ENCODE measurements at regions of chr2 and their contacts with region 1.

Region 1: GRCh38 chr2:216081487-216082116 is at the starts of genes PECR and TMEM169:
- DNase-seq: peak; percentile 85
- ATAC-seq: peak; percentile 92
- H3K4me3 Mint-ChIP-seq: peak within 1 kb of the TSS; percentile 96
- H3K27ac Mint-ChIP-seq: peak within 1 kb of the TSS; percentile 88
- H3K4me1 Mint-ChIP-seq: peaks cover 46% of the 10 kb centered on the region
- H3K27me3 Mint-ChIP-seq: peaks cover 2% of the 10 kb centered on the region
- total RNA-seq, gene PECR: 28.2 to 29.4 TPM
- total RNA-seq, gene TMEM169: 1.1 to 2.0 TPM

Region 2: GRCh38 chr2:215985257-215985656 is 96.3 kb before region 1 on chr2:
- POLR2A ChIA-PET with region 1: no interaction called
- DNase-seq: no peak
- ATAC-seq: no peak
- H3K4me3 Mint-ChIP-seq: no peak overlapping the region
- H3K27ac Mint-ChIP-seq: no peak overlapping the region
- H3K4me1 Mint-ChIP-seq: peaks cover 2% of the 10 kb centered on the region
- H3K27me3 Mint-ChIP-seq: no peaks in the 10 kb centered on the region

Region 3: DNA sequence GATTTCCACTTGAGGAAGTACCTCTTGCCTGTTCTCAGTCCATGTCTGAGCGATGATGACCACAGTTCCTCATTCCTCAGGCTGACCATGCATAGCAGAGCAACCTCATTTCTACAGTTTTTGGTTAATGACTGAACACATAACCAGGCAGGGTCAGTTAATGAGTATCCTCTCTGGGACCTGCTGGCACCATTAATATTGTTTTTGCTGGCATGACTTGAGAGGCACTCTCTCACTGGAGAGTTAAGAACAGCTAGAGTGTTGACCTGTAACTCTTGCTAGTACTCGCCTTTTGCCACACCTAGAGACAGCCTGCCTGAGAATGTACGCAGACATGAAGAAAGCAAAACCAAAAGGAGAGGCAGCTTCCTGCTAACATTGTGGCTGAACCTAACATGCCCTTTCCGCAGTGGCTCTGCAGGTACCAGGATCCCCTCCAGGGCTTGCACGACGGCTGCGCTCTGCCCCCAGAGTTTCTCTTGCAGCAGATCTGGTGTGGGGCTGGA is 23.9 kb before region 1 on chr2:
- POLR2A ChIA-PET with region 1: interaction called, 11 read pairs
- DNase-seq: peak; percentile 66
- ATAC-seq: peak; percentile 99
- H3K4me3 Mint-ChIP-seq: peak overlapping the region; percentile 79
- H3K27ac Mint-ChIP-seq: peak overlapping the region; percentile 92
- H3K4me1 Mint-ChIP-seq: peaks cover 31% of the 10 kb centered on the region
- H3K27me3 Mint-ChIP-seq: no peaks in the 10 kb centered on the region

Region 4: GRCh38 chr2:216388046-216388884 is 306.7 kb after region 1 on chr2:
- POLR2A ChIA-PET with region 1: no interaction called
- DNase-seq: no peak
- ATAC-seq: peak; percentile 99
- H3K4me3 Mint-ChIP-seq: peak overlapping the region; percentile 46
- H3K27ac Mint-ChIP-seq: peak overlapping the region; percentile 54
- H3K4me1 Mint-ChIP-seq: peaks cover 17% of the 10 kb centered on the region
- H3K27me3 Mint-ChIP-seq: peaks cover 5% of the 10 kb centered on the region

Region 5: DNA sequence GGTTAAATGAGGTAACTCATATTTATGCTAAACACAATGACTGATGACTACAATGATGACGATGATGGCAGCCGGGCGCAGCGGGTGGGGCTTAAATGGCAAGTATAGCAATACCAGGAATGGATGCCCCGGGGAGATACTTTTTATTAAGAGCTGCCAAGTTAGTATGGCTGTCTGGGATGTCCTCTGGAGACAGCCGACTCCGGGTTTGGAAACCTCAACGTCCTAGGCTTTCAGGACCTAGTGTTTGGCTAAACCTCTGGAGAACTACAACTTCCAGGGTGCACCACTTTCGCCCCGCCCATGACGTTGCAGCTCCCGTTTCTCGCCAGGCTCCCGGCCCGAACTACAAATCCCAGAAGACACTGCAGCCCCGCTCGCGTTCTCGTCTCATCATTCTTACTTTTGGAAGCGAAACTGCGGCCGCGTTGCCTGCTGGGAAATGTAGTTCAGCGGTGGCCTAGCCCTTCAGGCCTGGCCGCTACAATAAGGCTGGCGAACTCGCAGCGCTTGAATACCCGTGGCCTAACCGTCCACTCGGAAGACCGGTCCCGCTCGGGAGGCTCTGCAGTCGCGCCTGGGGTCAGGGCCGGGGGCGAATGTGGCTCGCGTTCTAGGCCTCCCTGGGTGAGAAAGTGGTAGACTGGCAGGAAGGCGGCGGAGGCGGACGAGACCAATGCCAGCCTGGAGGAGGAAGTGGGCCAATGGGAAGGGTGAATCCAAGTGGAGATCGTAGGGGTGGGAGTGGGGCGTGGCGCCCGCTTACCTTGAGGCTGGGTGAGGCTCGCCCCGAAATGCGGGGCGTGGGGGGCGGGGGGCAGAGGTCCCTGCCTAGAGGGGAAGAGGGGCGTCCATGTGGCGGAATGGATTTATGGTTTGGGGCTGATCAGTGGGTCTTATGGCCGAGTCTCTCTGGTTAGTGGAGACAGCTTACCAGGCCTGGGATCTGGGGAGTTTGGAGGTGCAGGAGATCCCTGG is 330.7 kb after region 1 on chr2 and contains the start of gene SMARCAL1:
- POLR2A ChIA-PET with region 1: no interaction called
- DNase-seq: peak; percentile 97
- ATAC-seq: peak; percentile 89
- H3K4me3 Mint-ChIP-seq: peak within 1 kb of the TSS; percentile 96
- H3K27ac Mint-ChIP-seq: peak within 1 kb of the TSS; percentile 97
- H3K4me1 Mint-ChIP-seq: peaks cover 18% of the 10 kb centered on the region
- H3K27me3 Mint-ChIP-seq: peaks cover 7% of the 10 kb centered on the region
- total RNA-seq, gene SMARCAL1: 24.5 to 25.7 TPM

Measured in activated naive CD8-positive, alpha-beta T cell treated with anti-CD3 and anti-CD28 coated beads, Interleukin-2, amount 10 ng/mL, durations not matched to agents 7 days and 5 days (primary cell).